Activated T-helper 1 cell treated with anti-CD3 and anti-CD28 coated beads, Interleukin-12 subunit alpha, Interleukin-12 subunit beta, Interleukin-2, Interleukin-4 antibody, amounts not matched to agents 30 ng/mL and 10 ng/mL and 1 ng/mL, durations not matched to agents 14 hours and 24 hours and 36 hours (primary cell): ENCODE measurements at regions of chrX and their contacts with region 1.

Region 1: GRCh38 chrX:130401415-130402207 is at the start of gene RBMX2:
- DNase-seq: peak; percentile 64
- H3K4me3 Mint-ChIP-seq: peak within 1 kb of the TSS; percentile 100
- H3K27ac Mint-ChIP-seq: peak within 1 kb of the TSS; percentile 89
- H3K4me1 Mint-ChIP-seq: no peaks in the 10 kb centered on the region
- H3K27me3 Mint-ChIP-seq: peaks cover 6% of the 10 kb centered on the region
- total RNA-seq, gene RBMX2: 26.0 and 26.3 TPM in 2 replicates

Region 2: DNA sequence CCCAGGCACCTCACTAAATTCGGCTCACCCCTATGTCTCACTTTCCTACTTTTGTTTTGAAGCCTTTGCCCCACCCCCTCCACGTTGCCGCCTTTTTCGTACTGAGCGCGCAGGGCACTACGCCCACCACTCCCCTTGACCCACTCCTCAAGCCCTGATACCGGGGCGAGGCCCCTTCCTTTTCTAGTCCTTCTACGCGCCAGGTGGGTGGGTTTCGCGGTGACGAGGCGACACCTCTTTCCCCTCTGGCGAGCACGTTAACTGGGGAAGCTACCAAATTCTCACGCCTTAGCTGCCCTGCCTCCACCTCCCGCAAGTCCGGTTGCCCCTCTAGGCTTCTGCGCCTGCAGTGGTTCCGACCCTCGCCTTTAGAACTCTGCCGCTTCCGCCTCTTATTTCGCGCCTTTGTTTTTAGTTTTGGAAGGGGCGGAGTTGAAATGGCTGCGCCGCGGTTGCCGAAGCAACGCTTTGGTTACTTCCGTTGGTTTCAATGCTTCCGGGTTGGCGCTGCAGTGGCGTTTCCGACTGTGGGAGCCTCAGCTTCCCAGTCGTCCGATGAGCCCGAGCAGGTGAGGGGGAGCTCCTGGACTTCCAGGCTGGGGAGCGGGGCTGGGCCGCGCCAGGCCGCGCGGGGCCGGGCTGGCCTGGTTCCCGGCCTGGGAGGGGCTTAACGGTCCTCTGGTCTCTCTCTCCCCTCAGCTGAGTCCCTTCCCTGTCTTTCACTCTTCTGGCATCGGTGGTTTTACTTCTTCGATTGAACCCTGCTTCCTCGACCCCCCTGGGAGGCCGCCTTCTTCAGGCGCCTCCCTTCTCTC is 62.0 kb before region 1 on chrX and contains the start of gene SLC25A14:
- intact Hi-C with region 1: loop called (anchors 1 kb)
- DNase-seq: peak; percentile 69
- H3K4me3 Mint-ChIP-seq: peak within 1 kb of the TSS; percentile 94
- H3K27ac Mint-ChIP-seq: peak within 1 kb of the TSS; percentile 96
- H3K4me1 Mint-ChIP-seq: peaks cover 15% of the 10 kb centered on the region
- H3K27me3 Mint-ChIP-seq: peaks cover 2% of the 10 kb centered on the region
- total RNA-seq, gene SLC25A14: 8.1 and 10.5 TPM in 2 replicates